ENCODE measurements at regions of chr17 and their contacts with region 1.

Region 1: GRCh38 chr17:66466840-66467367 is 164.5 kb downstream of the PRKCA start:
- DNase-seq: peak; percentile 94
- H3K4me3 ChIP-seq: peak overlapping the region in 2 of 3 experiments; percentile 20 to 24
- H3K27ac ChIP-seq: peak overlapping the region; percentile 64
- H3K4me1 ChIP-seq: peaks cover 44% of the 10 kb centered on the region
- H3K27me3 ChIP-seq: no peaks in the 10 kb centered on the region
- CTCF ChIP-seq: no peak
- POLR2A ChIP-seq: peak; percentile 48

Region 2: GRCh38 chr17:66275651-66276050 is 191.3 kb before region 1 on chr17:
- CTCF ChIA-PET with region 1: no interaction called
- POLR2A ChIA-PET with region 1: interaction called, 3 read pairs
- dilution Hi-C with region 1: no loop called
- intact Hi-C with region 1: loop called (anchors 1 kb)
- DNase-seq: peak; percentile 90
- H3K4me3 ChIP-seq: no peak overlapping the region
- H3K27ac ChIP-seq: peak overlapping the region; percentile 87
- H3K4me1 ChIP-seq: peaks cover 30% of the 10 kb centered on the region
- H3K27me3 ChIP-seq: no peaks in the 10 kb centered on the region
- CTCF ChIP-seq: no peak
- POLR2A ChIP-seq: no peak

Region 3: GRCh38 chr17:66405836-66406677 is 60.8 kb before region 1 on chr17:
- CTCF ChIA-PET with region 1: no interaction called
- POLR2A ChIA-PET with region 1: no interaction called
- dilution Hi-C with region 1: no loop called
- intact Hi-C with region 1: no loop called
- DNase-seq: peak; percentile 63
- H3K4me3 ChIP-seq: no peak overlapping the region
- H3K27ac ChIP-seq: no peak overlapping the region
- H3K4me1 ChIP-seq: no peaks in the 10 kb centered on the region
- H3K27me3 ChIP-seq: no peaks in the 10 kb centered on the region
- CTCF ChIP-seq: no peak
- POLR2A ChIP-seq: no peak

Region 4: GRCh38 chr17:66477615-66478283 is 10.8 kb after region 1 on chr17:
- CTCF ChIA-PET with region 1: no interaction called
- POLR2A ChIA-PET with region 1: no interaction called
- dilution Hi-C with region 1: no loop called
- intact Hi-C with region 1: no loop called
- DNase-seq: no peak
- H3K4me3 ChIP-seq: no peak overlapping the region
- H3K27ac ChIP-seq: no peak overlapping the region
- H3K4me1 ChIP-seq: no peaks in the 10 kb centered on the region
- H3K27me3 ChIP-seq: no peaks in the 10 kb centered on the region
- CTCF ChIP-seq: no peak
- POLR2A ChIP-seq: no peak